Panc1 (cell line): ENCODE measurements at regions of chr2 and their contacts with region 1.

Region 1: GRCh38 chr2:227643990-227644551 is 22.5 kb upstream of the SCYGR5 start:
- DNase-seq: no peak
- ATAC-seq: no peak
- H3K4me3 ChIP-seq: no peak overlapping the region
- H3K27ac ChIP-seq: no peak overlapping the region
- H3K4me1 ChIP-seq: no peaks in the 10 kb centered on the region
- H3K27me3 ChIP-seq: no peaks in the 10 kb centered on the region
- CTCF ChIP-seq: no peak

Region 2: GRCh38 chr2:227617316-227618230 is 26.5 kb before region 1 on chr2 and contains the start of gene SCYGR4:
- CTCF ChIA-PET with region 1: no interaction called
- POLR2A ChIA-PET with region 1: no interaction called
- in situ Hi-C with region 1: no loop called
- intact Hi-C with region 1: no loop called
- DNase-seq: no peak
- ATAC-seq: no peak
- H3K4me3 ChIP-seq: no peak within 1 kb of the TSS
- H3K27ac ChIP-seq: no peak within 1 kb of the TSS
- H3K4me1 ChIP-seq: no peaks in the 10 kb centered on the region
- H3K27me3 ChIP-seq: no peaks in the 10 kb centered on the region
- CTCF ChIP-seq: no peak
- total RNA-seq, gene SCYGR4: not detected

Region 3: DNA sequence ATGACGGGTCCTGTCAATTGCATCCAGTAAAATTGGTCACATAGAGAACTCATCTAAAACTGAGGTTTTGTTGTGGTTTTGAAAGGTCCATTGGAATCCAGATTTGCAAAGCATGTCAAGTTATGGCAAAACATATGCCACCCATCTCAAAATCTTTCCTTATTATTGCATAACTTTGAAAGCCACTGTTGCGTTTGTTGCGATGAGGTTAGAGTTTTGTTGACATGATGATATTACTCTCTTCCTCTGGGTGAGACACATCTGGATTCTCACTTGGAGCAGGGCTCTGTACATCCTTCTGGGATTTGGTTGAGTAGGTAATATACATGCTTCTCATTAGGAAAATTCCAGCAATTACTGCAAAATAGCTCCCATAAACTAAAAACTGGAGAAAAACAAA is 43.1 kb after region 1 on chr2:
- CTCF ChIA-PET with region 1: no interaction called
- POLR2A ChIA-PET with region 1: no interaction called
- in situ Hi-C with region 1: no loop called
- intact Hi-C with region 1: loop called (anchors 1 kb)
- DNase-seq: no peak
- ATAC-seq: no peak
- H3K4me3 ChIP-seq: no peak overlapping the region
- H3K27ac ChIP-seq: no peak overlapping the region
- H3K4me1 ChIP-seq: no peaks in the 10 kb centered on the region
- H3K27me3 ChIP-seq: 0 out of 2 replicates have a peak, but pooled peaks cover 2% of the 10 kb centered on the region
- CTCF ChIP-seq: no peak

Region 4: DNA sequence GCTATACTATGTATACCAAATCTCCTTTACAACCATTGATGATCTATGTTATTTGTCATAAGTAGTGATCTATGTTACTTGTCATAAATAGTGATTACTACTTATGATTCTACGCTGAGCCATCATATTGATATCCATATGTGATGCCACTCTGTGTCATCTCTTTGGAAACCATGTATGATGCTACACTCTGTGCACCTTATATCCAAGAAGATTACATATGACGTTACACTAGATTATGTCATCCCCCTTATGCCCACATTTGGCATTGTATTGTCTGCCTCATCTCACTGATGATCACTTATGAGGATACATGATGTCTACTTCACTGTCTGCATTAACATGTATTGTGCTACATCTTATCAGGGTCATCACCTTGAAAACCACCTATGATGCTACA is 270.3 kb after region 1 on chr2:
- CTCF ChIA-PET with region 1: no interaction called
- POLR2A ChIA-PET with region 1: no interaction called
- in situ Hi-C with region 1: no loop called
- intact Hi-C with region 1: no loop called
- DNase-seq: no peak
- ATAC-seq: no peak
- H3K4me3 ChIP-seq: no peak overlapping the region
- H3K27ac ChIP-seq: no peak overlapping the region
- H3K4me1 ChIP-seq: no peaks in the 10 kb centered on the region
- H3K27me3 ChIP-seq: no peaks in the 10 kb centered on the region
- CTCF ChIP-seq: no peak